ENCODE measurements at regions of chr1 and their contacts with region 1.

Region 1: DNA sequence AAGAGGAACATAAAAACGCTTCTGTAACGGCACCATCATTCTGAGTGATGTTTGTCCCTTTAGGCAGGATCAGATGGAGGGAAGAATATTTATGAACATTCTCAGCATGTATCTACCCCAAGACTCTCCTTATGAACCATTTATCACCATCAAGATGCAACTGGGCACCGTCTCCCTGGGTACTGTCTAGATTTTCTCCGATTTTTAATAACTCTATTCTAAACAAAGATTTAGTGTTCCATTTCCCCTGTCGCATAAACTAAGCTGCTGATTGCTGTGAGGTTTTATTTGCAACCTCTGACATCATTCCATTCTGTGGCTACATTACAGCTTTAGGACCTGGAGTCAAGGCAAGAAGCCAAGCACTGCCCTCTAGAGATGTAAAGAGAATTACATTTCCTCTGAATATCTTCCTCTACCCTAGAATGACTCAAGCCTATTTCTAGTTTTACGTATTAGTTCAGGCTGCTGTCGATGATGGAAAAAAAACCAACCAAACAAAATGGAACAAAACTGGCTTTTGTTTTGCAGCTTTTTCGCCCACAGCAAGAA is 130.1 kb upstream of the MAP1LC3C start:
- H3K4me3 ChIP-seq: no peak overlapping the region
- H3K27ac ChIP-seq: no peak overlapping the region
- H3K4me1 ChIP-seq: no peaks in the 10 kb centered on the region
- CTCF ChIP-seq: peak; percentile 33; the same call in 1 of the 2 replicates

Region 2: DNA sequence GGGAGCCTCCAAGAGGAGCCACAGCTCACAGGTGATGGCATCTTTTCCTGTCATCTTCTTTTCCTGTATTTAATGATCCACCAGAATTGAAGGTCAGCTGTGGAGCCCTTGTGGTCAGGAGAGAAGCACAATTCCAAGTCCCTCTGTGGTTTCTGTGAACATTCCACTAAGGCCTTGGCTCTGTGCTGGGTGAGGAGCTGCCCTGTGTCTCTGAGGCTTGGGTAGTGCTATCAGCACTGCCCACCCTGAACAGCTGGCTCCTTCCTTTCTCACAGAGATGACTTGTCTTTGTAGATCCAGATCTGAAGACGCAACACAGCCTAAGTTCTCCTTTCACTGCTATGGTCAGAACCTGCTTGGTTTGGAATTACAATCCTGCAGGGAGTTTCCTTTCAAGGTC is 11.8 kb after region 1 on chr1:
- CTCF ChIA-PET with region 1: interaction called, 10 read pairs
- POLR2A ChIA-PET with region 1: no interaction called
- H3K4me3 ChIP-seq: no peak overlapping the region
- H3K27ac ChIP-seq: no peak overlapping the region
- H3K4me1 ChIP-seq: no peaks in the 10 kb centered on the region
- CTCF ChIP-seq: no peak